Activated CD4-positive, alpha-beta T cell treated with anti-CD3 and anti-CD28 coated beads, Interleukin-2, amount 10 ng/mL, durations not matched to agents 24 days and 14 days (primary cell): ENCODE measurements at regions of chr3 and their contacts with region 1.

Region 1: GRCh38 chr3:59866076-59866475 is 816.3 kb upstream of the CFAP20DC start:
- DNase-seq: no peak
- H3K4me3 Mint-ChIP-seq: no peak overlapping the region
- H3K27ac Mint-ChIP-seq: no peak overlapping the region
- H3K4me1 Mint-ChIP-seq: peaks cover 29% of the 10 kb centered on the region
- H3K27me3 Mint-ChIP-seq: no peaks in the 10 kb centered on the region

Region 2: DNA sequence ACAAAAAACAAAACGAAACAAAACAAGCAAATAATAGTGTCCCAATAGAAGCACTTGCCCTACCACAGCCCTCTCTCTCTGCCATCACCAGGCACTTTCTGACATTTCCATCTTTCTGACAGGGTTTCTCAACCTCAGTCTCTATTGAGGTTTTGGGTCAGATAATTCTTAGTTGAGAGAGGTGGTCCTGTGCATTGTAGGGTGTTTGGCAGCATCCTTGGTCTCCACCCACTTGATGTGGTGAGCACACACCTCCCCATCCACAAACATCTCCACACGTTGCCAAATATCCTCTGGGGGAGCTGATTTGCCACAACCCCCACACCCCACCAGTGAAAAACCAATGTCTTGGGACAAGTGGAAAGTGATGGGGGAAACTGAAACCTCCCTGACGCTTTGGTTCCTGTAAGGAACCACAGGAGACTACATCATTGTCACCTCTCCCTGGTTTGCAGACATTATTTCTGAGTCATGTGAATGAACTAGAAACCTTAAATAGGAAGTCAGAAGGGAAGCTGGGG is 82.5 kb before region 1 on chr3:
- intact Hi-C with region 1: loop called (anchors 5 kb)
- DNase-seq: peak; percentile 79
- H3K4me3 Mint-ChIP-seq: peak overlapping the region; percentile 39
- H3K27ac Mint-ChIP-seq: peak overlapping the region; percentile 76
- H3K4me1 Mint-ChIP-seq: peaks cover 31% of the 10 kb centered on the region
- H3K27me3 Mint-ChIP-seq: no peaks in the 10 kb centered on the region

Region 3: DNA sequence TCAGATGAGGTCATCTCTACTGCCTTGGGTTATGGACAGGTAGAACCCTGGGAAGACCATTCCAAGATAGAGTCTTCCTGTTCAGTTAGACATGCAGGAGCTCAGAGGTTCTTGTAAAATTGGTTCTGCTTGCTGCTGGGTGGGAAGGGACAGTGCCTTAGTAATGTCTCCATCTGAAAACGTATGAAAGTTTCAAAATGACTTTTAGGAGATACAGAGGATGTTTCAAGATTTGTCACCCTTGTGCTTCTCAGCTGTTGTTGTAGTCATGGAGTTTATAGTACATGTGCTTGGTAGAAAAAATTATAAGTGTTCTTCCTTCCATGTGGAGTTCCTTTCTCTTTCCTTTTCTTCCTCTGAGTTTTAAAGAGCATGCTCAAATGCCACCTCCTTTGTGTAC is 68.9 kb after region 1 on chr3:
- intact Hi-C with region 1: loop called (anchors 2 kb)
- DNase-seq: peak; percentile 62
- H3K4me3 Mint-ChIP-seq: peak overlapping the region; percentile 58
- H3K27ac Mint-ChIP-seq: peak overlapping the region; percentile 88
- H3K4me1 Mint-ChIP-seq: peaks cover 28% of the 10 kb centered on the region
- H3K27me3 Mint-ChIP-seq: no peaks in the 10 kb centered on the region

Region 4: DNA sequence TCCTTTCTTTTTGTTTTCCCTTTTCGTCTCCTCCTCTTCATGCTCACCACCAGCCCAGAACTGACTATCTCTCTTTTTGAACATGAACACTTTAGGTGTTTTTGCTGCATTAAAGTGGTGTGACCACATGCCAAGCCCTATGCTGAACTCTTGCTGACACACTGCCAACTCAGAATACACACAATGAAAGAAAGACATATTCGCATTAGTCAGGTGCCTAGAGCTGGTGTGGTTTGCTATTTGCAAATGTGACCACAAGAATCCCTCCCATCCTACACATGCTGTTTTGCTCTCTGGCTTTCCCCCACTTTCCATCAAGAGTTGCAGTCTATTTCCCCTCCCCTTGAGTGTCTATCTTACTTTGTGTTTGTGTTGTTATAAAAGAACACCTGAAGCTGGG is 151.6 kb after region 1 on chr3:
- intact Hi-C with region 1: loop called (anchors 2 kb)
- DNase-seq: peak; percentile 89
- H3K4me3 Mint-ChIP-seq: peak overlapping the region; percentile 73
- H3K27ac Mint-ChIP-seq: peak overlapping the region; percentile 94
- H3K4me1 Mint-ChIP-seq: peaks cover 51% of the 10 kb centered on the region
- H3K27me3 Mint-ChIP-seq: no peaks in the 10 kb centered on the region